ENCODE measurements at regions of chr6 and their contacts with region 1.

Region 1: DNA sequence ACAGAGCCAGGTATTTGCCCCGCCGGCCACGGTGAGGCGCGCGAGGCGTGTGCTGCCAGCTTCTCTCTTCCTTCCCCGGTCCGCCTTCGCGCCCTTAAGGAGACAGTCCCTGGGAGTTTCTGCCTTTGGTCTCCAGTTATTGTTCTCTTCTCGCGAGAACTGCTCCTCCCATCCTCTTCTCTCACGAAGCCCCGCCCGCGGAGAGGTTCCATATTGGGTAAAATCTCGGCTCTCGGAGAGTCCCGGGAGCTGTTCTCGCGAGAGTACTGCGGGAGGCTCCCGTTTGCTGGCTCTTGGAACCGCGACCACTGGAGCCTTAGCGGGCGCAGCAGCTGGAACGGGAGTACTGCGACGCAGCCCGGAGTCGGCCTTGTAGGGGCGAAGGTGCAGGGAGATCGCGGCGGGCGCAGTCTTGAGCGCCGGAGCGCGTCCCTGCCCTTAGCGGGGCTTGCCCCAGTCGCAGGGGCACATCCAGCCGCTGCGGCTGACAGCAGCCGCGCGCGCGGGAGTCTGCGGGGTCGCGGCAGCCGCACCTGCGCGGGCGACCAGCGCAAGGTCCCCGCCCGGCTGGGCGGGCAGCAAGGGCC is at the start of gene MAPK14:
- DNase-seq: peak; percentile 99 to 100
- H3K4me3 ChIP-seq: peak within 1 kb of the TSS; percentile 95
- CTCF ChIP-seq: peak in 1 of 3 donors; percentile 98
- POLR2A ChIP-seq: peak in 1 of 2 donors; percentile 69
- total RNA-seq, gene MAPK14: 63.0 to 153 (median 77.7) TPM

Region 2: DNA sequence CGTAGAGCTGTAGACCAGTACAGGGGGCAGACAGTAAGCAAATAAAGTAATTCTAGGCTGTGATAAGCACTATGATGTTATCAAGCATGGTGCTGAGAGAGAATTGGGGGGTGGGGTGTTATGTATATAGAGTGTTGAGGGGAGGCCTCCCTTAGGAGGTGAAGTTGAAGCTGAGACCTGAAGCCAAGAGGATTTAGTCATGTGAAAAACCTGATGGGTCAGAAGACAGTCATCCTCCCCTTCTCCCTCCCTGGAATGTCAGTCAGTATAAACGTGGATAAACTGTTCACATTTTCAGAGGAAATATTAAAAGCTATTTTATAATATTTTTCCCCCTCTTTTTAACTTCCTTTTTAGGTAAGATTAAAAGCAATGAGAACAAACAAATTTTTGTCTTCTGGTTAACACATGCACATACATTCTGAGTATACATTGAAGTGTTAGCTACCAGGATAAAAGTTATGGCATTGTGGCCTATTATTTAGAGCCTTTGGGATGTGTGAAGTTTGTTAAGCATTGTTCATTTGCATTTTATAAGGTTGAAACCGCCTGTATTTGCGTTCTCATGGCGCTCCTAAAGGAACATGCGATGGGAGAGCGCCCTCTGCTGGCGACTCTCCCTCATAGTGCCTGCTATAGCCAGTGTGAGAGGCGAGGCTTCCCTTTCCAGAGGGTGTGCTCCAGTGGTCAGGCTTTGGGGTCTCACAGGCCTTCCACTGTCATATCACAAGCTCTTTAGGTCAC is 67.3 kb after region 1 on chr6:
- intact Hi-C with region 1: loop called (anchors 5 kb)
- DNase-seq: peak; percentile 80 to 98
- H3K4me3 ChIP-seq: no peak overlapping the region
- CTCF ChIP-seq: peak in 1 of 3 donors; percentile 72
- POLR2A ChIP-seq: no peak

Region 3: DNA sequence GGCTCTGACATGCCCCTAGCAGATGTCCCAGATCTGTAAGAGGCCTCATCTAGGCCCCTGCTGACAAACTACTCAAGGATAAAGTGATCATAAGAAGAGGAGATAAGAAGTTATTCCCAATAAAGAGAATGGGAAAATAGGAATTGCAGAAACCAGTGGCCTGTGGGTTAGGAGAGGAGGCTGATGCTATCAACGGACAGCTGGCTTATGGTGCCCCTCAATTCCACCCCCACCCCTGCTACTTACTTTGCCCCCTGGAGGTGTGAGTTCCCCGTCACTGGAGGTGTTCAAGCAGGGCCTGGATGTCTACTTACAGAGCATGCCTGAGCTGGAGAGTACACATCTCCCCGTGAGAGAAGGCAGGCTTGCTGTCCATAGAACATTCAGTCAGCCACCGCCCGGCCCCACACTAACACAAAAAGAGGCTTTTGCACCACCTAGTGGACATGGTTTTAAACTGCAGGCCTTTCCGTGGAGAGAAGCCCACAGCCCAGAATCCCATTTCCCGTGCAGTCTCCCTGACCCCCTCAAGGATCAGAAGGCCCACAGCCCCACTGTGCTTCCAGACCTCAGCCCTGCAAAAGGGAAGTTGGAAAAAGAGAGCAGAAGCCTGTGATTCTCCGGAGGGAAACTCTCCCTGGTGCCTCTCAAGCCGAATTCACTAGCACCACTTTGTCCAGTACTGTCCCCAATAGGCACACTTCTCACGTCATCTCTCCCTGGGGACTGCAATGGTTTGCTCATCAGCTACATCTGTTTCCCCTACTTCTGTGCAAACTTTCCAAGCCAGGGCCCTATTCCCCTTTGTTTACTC is 332.9 kb after region 1 on chr6:
- intact Hi-C with region 1: loop called (anchors 5 kb)
- DNase-seq: peak; percentile 78 to 96
- H3K4me3 ChIP-seq: no peak overlapping the region
- CTCF ChIP-seq: peak in 1 of 3 donors; percentile 50
- POLR2A ChIP-seq: no peak